H1 (cell line): ENCODE measurements at regions of chr11 and their contacts with region 1.

Region 1: GRCh38 chr11:9363954-9364912 is 20.2 kb upstream of the IPO7 start:
- DNase-seq: peak; percentile 88 to 89
- H3K4me3 ChIP-seq: peak overlapping the region; percentile 19 to 59 (median 45)
- H3K27ac ChIP-seq: peak overlapping the region; percentile 92
- H3K4me1 ChIP-seq: peaks cover 4 to 15% (median 10%) of the 10 kb centered on the region in 4 experiments
- H3K27me3 ChIP-seq: no peaks in the 10 kb centered on the region
- CTCF ChIP-seq: no peak
- EP300 ChIP-seq: peak in 1 of 2 experiments; percentile 19; a peak in 1 of 3 replicates
- POLR2A ChIP-seq: peak; percentile 55 to 80; a peak in 2 of 3 replicates
- RAD21 ChIP-seq: no peak

Region 2: DNA sequence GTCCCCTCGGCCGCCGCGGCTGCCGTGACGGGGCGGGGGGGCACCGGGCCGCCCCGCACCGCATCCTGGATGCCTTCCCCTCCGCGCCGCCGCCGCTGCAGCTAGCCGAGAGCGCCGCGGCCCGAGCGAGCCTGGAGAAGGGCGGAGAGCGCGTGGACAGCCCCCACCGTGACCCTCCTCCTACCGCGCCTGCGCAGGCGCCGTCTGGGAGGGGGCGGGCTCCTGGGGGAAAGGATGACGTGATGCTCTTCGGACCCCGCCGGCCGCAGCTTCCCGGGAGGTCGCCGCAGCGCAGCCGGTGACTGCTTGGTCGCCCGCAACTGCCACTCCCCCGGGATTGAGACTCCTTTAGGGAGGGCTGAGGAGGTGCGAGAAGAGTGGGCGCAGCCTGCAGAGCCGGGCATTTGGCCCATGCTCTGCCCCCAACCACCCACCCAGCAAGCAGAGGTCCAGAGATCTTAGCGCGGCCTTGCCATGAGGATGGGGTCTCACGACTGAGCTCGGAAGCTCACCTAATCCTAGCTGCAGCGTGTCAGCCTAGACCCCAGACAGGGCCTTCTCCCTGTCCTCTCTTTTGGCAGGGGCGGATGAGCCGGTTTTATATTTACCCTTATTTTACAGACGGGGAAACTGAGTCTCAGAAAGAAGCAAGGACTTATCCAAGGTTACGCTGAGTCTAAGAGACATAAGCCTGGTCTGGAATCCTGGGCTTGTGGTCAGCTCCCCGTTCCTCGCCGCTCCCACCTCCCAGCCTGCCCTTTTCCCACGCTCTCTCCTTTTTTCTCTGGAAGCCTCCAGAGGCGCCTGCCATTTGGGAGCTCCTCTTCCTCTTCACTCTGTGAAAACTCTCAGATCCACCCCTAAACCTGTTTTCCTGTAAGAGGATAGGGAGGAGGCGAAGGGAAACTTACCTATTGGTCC is 98.8 kb before region 1 on chr11 and contains the start of gene DENND5A:
- CTCF ChIA-PET with region 1: no interaction called
- POLR2A ChIA-PET with region 1: interaction called, 14 read pairs
- DNase-seq: peak; percentile 61 to 82
- H3K4me3 ChIP-seq: peak within 1 kb of the TSS; percentile 79 to 96 (median 88)
- H3K27ac ChIP-seq: peak within 1 kb of the TSS; percentile 65; the same call in 1 of the 2 replicates
- H3K4me1 ChIP-seq: peaks cover 2 to 4% (median 3%) of the 10 kb centered on the region in 4 experiments; a peak in 3 of 7 replicates
- H3K27me3 ChIP-seq: no peaks in the 10 kb centered on the region
- CTCF ChIP-seq: no peak
- EP300 ChIP-seq: no peak
- POLR2A ChIP-seq: peak; percentile 71 to 87
- RAD21 ChIP-seq: no peak
- total RNA-seq, gene DENND5A: 65.7 and 69.2 TPM in 2 replicates

Region 3: GRCh38 chr11:9738116-9738515 is 373.9 kb after region 1 on chr11:
- CTCF ChIA-PET with region 1: no interaction called
- POLR2A ChIA-PET with region 1: no interaction called
- DNase-seq: no peak
- H3K4me3 ChIP-seq: no peak overlapping the region
- H3K27ac ChIP-seq: peak overlapping the region; percentile 26; the same call in 1 of the 2 replicates
- H3K4me1 ChIP-seq: no peaks in the 10 kb centered on the region
- H3K27me3 ChIP-seq: no peaks in the 10 kb centered on the region
- CTCF ChIP-seq: no peak
- EP300 ChIP-seq: no peak
- POLR2A ChIP-seq: no peak
- RAD21 ChIP-seq: no peak